ENCODE measurements at regions of chr1 and their contacts with region 1.

Region 1: GRCh38 chr1:199529324-199529723 is 498.2 kb upstream of the NR5A2 start:
- DNase-seq: no peak
- ATAC-seq: no peak
- H3K4me3 ChIP-seq: no peak overlapping the region
- H3K27ac ChIP-seq: no peak overlapping the region
- H3K4me1 ChIP-seq: no peaks in the 10 kb centered on the region
- H3K27me3 ChIP-seq: no peaks in the 10 kb centered on the region
- CTCF ChIP-seq: no peak

Region 2: GRCh38 chr1:198967566-198967965 is 561.8 kb before region 1 on chr1:
- intact Hi-C with region 1: loop called in 1 of 10 experiments (anchors 5 kb)
- DNase-seq: no peak
- ATAC-seq: no peak
- H3K4me3 ChIP-seq: no peak overlapping the region
- H3K27ac ChIP-seq: no peak overlapping the region
- H3K4me1 ChIP-seq: no peaks in the 10 kb centered on the region
- H3K27me3 ChIP-seq: no peaks in the 10 kb centered on the region
- CTCF ChIP-seq: no peak

Region 3: DNA sequence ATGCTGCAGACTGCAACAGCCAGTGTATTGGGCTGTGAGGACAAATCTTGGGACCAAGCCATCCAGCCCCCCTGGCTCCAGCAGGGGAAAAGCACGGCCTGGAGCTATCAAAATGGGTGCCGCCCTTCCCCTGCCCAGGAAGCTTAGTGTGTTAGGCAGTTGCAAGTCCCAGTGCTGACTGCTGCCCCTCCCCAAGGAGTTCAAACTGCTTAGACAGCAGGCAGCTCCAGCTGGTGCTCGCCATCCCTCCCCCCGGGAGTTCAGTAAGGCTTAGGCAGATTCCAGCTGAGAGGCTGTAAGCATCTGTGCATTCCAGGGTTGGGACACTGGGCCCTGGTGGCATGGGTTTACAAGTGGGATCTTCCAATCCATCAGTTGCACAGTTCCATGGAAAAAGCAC is 81.4 kb before region 1 on chr1:
- intact Hi-C with region 1: no loop called
- DNase-seq: no peak
- ATAC-seq: no peak
- H3K4me3 ChIP-seq: no peak overlapping the region
- H3K27ac ChIP-seq: no peak overlapping the region
- H3K4me1 ChIP-seq: no peaks in the 10 kb centered on the region
- H3K27me3 ChIP-seq: no peaks in the 10 kb centered on the region
- CTCF ChIP-seq: no peak

Measured in heart right ventricle (tissue), 16 donors.